Endothelial cell of umbilical vein (primary cell): ENCODE measurements at regions of chr9 and their contacts with region 1.

Region 1: GRCh38 chr9:78035383-78035993 is 3.9 kb upstream of the GNAQ start:
- DNase-seq: peak; percentile 88
- H3K4me3 ChIP-seq: no peak overlapping the region
- H3K27ac ChIP-seq: no peak overlapping the region
- H3K4me1 ChIP-seq: peaks cover 38% of the 10 kb centered on the region
- H3K27me3 ChIP-seq: no peaks in the 10 kb centered on the region
- CTCF ChIP-seq: peak; percentile 69 to 74
- POLR2A ChIP-seq: no peak

Region 2: GRCh38 chr9:77456829-77457437 is 578.6 kb before region 1 on chr9:
- CTCF ChIA-PET with region 1: interaction called, 10 read pairs
- POLR2A ChIA-PET with region 1: no interaction called
- dilution Hi-C with region 1: no loop called
- intact Hi-C with region 1: loop called (anchors 5 kb)
- DNase-seq: peak; percentile 93
- H3K4me3 ChIP-seq: no peak overlapping the region
- H3K27ac ChIP-seq: no peak overlapping the region
- H3K4me1 ChIP-seq: no peaks in the 10 kb centered on the region
- H3K27me3 ChIP-seq: no peaks in the 10 kb centered on the region
- CTCF ChIP-seq: peak; percentile 81 to 90
- POLR2A ChIP-seq: no peak

Region 3: GRCh38 chr9:77793904-77794303 is 241.6 kb before region 1 on chr9:
- CTCF ChIA-PET with region 1: interaction called, 4 read pairs
- POLR2A ChIA-PET with region 1: no interaction called
- dilution Hi-C with region 1: no loop called
- intact Hi-C with region 1: loop called (anchors 2 kb)
- DNase-seq: peak; percentile 74
- H3K4me3 ChIP-seq: no peak overlapping the region
- H3K27ac ChIP-seq: peak overlapping the region; percentile 39
- H3K4me1 ChIP-seq: peaks cover 12% of the 10 kb centered on the region
- H3K27me3 ChIP-seq: no peaks in the 10 kb centered on the region
- CTCF ChIP-seq: no peak
- POLR2A ChIP-seq: no peak

Region 4: DNA sequence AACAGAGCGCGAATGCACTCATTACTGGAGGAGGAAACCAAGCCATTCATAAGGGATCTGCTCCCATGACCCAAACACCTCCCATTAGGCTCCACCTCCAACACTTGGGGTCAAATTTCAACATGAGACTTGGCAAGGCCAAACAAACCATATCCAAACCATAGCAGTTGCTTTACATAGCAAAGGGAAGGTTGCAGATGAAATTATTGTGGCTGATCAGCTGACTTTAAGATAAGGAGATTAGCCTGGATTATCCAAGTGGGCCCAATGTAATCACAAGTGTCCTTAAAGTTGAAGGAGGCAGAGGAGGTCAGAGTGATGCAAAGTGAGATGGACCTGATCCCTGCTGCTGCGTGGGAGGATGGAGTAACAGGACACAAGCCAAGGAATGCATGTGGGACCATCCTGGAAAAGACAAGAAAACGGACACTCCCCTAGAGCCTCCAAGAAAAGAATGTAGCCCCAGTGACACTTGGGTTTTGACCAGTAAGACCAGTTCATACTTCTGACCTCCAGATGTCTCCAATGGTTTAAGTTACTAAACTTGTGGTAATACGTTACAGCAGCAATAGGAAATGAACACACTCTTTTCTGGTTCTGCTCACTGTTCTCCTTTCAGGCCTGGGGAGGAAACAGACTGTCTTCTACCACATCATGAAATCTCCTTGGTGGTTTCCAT is 171.1 kb before region 1 on chr9:
- CTCF ChIA-PET with region 1: interaction called, 11 read pairs
- POLR2A ChIA-PET with region 1: no interaction called
- dilution Hi-C with region 1: no loop called
- intact Hi-C with region 1: no loop called
- DNase-seq: no peak
- H3K4me3 ChIP-seq: no peak overlapping the region
- H3K27ac ChIP-seq: no peak overlapping the region
- H3K4me1 ChIP-seq: no peaks in the 10 kb centered on the region
- H3K27me3 ChIP-seq: no peaks in the 10 kb centered on the region
- CTCF ChIP-seq: no peak
- POLR2A ChIP-seq: no peak

Region 5: DNA sequence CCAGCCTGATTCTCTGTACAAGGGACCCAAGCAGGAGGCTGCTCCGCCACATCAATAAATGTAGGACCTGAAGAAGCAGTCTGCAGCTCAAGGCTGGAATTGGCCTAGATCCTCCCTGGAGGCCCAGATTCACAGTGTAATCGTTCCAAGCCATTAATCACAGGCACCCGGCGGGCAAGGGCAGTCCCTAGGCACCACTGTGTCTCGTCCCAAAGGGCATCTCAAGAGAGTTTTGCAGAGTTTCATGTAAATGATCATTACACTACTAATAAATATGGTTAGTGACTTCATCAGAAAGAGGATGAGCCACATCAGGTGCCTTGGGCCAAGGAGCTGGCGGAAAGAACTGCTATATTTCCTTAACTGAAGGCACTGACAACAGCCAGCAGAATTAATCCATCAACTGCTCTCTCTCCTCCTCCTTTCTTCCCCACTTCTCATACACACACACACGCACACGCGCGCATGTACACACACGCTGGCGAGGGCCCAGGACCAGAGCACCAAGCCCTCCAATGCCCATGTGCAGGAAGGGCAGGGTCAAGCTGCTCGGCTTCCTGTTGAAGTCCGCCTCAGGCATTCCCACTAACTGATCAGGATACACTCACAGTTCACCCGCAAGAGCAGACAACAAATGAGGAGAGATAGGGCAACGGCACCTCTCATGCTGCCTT is 37.7 kb before region 1 on chr9:
- CTCF ChIA-PET with region 1: interaction called, 10 read pairs
- POLR2A ChIA-PET with region 1: no interaction called
- dilution Hi-C with region 1: no loop called
- intact Hi-C with region 1: no loop called
- DNase-seq: peak; percentile 94
- H3K4me3 ChIP-seq: peak overlapping the region in 1 of 3 experiments; percentile 21
- H3K27ac ChIP-seq: peak overlapping the region; percentile 60
- H3K4me1 ChIP-seq: peaks cover 59% of the 10 kb centered on the region
- H3K27me3 ChIP-seq: no peaks in the 10 kb centered on the region
- CTCF ChIP-seq: no peak
- POLR2A ChIP-seq: no peak

Region 6: DNA sequence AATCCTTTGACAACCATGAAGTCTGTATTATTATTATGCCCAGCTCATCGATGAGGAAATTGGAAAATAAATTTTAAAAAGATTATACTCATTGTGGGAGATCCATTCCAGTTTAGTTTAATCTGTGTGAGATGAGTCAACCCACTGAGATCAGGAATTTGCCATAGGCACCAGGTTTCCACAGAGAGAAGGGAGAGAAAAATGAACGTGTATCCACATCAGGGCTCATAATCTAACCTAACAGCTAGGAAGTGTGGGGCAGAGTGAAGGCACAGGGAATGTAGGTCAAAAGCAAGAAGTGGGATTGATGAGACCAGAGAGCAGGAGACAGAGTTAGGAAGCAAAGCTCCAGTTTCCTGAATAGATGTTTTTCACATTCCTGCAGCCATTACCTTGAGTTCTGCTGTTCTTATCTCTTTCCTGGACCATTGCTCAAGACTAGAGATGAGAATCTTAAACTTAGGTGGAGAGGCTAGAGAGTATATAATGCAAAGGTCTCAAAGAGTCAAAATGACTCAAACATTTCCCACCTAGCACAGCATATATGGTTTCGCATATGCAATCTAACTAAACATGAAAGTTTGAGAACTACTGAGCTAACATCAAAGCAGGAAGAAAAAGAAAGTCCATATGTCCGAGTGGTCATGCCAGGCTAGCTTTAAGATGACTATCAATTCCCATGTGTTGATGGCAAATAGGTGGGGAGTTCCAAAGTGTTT is 37.2 kb after region 1 on chr9:
- CTCF ChIA-PET with region 1: no interaction called
- POLR2A ChIA-PET with region 1: no interaction called
- dilution Hi-C with region 1: no loop called
- intact Hi-C with region 1: no loop called
- DNase-seq: no peak
- H3K4me3 ChIP-seq: no peak overlapping the region
- H3K27ac ChIP-seq: no peak overlapping the region
- H3K4me1 ChIP-seq: no peaks in the 10 kb centered on the region
- H3K27me3 ChIP-seq: peaks cover 4 to 8% of the 10 kb centered on the region in 2 experiments
- CTCF ChIP-seq: no peak
- POLR2A ChIP-seq: no peak

Region 7: DNA sequence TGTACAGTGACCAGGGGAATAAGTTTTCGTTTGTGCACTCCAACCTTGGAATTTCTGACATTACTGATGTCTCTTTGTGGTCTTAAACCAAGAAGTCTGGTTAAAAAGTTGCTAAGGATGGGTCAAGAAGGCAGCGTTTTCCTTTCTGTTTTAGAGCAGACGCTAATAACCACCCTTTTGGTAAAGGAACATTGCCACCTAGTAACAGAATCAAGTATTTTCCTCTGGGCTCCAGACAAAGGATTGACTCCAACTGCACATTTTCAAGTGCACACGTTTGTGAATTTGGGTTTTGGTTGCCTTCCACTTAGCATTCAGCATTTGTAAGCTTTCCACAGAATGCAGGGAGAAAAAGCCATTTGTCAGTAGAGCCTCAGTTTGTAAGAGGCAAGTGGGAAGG is 178.2 kb after region 1 on chr9:
- CTCF ChIA-PET with region 1: interaction called, 5 read pairs
- POLR2A ChIA-PET with region 1: no interaction called
- dilution Hi-C with region 1: no loop called
- intact Hi-C with region 1: loop called (anchors 1 kb)
- DNase-seq: peak; percentile 77
- H3K4me3 ChIP-seq: no peak overlapping the region
- H3K27ac ChIP-seq: no peak overlapping the region
- H3K4me1 ChIP-seq: peaks cover 2% of the 10 kb centered on the region
- H3K27me3 ChIP-seq: no peaks in the 10 kb centered on the region
- CTCF ChIP-seq: peak; percentile 17 to 46
- POLR2A ChIP-seq: no peak